ENCODE measurements at regions of chr15 and their contacts with region 1.

Region 1: DNA sequence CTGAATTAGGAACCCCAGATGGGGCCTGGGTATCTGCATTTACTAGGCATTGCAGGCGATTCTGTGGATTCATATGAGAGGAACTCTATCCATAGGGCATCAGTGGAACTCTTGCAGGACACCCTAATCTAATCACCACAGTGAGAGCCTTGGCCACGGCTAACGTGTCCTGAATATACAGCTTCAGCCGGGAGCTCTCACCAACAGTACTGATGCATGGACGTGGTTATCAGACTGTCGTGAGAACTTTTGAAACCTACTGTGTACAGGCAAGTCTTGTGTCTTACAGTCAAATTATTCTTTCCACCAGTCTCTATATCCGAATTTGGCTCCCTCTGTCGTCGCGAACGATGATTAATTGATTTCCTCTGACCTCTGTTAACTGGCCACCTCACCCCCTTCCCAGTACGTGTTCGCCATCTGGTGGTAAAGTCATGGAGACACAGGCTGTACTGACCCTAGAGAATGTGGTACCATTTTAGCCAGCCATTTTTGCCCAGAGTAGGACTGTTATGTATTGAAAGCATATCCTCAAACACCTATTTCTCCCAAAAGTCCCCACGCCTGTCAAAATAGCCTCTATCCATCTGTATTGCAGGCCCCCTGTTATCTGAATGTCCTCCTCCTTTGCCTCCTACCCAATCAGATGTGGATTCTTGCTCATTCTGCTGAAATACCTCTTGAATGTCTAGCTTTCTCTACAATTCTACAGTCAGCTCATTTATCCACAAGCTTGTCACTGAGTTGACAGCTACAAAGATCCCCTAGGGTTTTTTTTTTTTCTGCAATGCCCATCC is 39.7 kb downstream of the GLDN start:
- DNase-seq: peak; percentile 72 to 78
- ATAC-seq: peak; percentile 90 to 97
- H3K4me3 ChIP-seq: no peak overlapping the region
- H3K27ac ChIP-seq: no peak overlapping the region
- H3K4me1 ChIP-seq: no peaks in the 10 kb centered on the region
- CTCF ChIP-seq: peak; percentile 96
- EP300 ChIP-seq: no peak
- POLR2A ChIP-seq: no peak
- RAD21 ChIP-seq: peak; percentile 97 to 99

Region 2: DNA sequence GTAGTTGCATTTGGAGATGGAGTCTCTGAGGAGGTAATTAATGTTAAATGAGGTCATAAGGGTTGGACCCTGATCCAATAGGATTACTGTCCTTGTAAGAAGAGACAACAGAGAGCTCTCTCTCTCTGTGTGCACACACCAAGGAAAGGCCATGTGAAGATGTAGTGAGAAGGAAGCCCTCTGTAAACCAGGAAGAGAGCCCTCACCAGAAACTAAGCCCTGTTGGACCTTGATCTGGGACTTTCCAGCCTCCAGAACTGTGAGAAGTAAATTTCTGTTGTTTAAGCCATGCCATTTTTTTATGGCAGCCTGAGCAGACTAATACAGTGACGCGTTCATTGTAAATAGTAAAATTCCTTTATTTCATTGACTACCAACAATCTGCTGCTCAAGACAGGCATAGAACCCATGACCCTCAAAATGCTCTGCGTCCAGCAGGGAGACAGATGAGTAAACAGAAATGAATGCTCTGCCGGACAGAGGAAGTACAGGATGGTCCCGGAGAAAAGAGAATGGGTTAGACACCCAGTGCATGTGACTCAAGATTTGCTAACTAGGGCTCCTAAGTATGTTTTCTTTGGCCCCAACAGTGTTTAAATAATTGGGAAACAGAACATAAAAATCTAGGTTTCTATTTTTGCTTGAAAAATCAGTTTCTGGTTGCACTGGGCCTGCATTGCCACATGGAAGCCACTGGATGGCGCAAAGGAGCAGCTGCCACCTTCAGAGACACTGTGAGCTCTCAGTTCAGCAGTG is 248.6 kb before region 1 on chr15:
- CTCF ChIA-PET with region 1: interaction called, 12 read pairs
- POLR2A ChIA-PET with region 1: no interaction called
- DNase-seq: peak; percentile 55 to 69
- ATAC-seq: peak; percentile 74 to 89
- H3K4me3 ChIP-seq: no peak overlapping the region
- H3K27ac ChIP-seq: peak overlapping the region; percentile 54 to 57
- H3K4me1 ChIP-seq: peaks cover 13% of the 10 kb centered on the region
- CTCF ChIP-seq: peak; percentile 86
- EP300 ChIP-seq: no peak
- POLR2A ChIP-seq: no peak
- RAD21 ChIP-seq: peak; percentile 68 to 69

Region 3: GRCh38 chr15:51192521-51193280 is 188.5 kb before region 1 on chr15:
- CTCF ChIA-PET with region 1: interaction called, 16 read pairs
- POLR2A ChIA-PET with region 1: no interaction called
- DNase-seq: peak; percentile 81 to 84
- ATAC-seq: peak; percentile 91 to 98
- H3K4me3 ChIP-seq: no peak overlapping the region
- H3K27ac ChIP-seq: no peak overlapping the region
- H3K4me1 ChIP-seq: no peaks in the 10 kb centered on the region
- CTCF ChIP-seq: peak; percentile 92
- EP300 ChIP-seq: no peak
- POLR2A ChIP-seq: no peak
- RAD21 ChIP-seq: peak; percentile 81 to 88

Region 4: DNA sequence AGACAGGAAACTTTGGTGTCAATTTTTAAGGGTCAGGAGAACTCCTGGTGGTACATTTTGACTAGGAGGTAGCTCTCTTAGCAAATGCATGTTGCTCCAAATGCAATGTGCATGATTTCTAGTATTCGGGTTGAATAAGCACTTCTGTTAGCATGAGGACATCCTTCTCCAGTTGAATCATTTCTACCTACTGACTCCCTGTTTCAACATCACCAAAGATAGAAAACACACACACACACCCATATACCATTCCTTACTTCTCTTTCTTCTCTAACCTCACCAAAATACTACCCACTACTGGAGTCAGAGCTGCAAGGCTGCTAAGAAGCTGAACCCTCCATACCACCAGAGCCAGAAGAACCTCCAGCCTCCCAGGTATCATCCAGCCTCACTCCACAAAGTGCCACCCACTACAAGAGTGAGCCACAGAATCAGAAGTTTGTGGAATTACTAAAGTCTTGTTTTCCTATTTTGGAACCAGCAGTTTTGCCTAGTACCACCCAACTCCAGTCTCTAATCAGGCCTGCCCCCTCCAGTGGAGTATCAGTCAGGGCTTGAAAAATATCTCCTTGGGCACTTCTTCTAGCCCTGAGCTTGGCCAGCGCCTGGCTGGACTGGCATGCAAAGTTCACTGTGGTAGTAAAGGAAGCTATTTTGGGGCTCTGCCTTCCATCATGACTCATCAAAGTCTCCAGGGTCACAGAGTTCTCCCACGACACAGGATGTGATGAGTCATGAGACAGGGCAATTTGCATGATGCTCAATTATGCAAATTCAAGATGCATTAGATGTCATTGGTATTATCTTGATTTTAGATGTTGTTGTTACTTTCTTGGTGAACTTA is 153.0 kb before region 1 on chr15:
- CTCF ChIA-PET with region 1: interaction called, 106 read pairs
- POLR2A ChIA-PET with region 1: no interaction called
- DNase-seq: peak; percentile 69 to 72
- ATAC-seq: peak; percentile 71 to 73
- H3K4me3 ChIP-seq: no peak overlapping the region
- H3K27ac ChIP-seq: peak overlapping the region; percentile 31 to 68; a peak in 5 of 6 replicates
- H3K4me1 ChIP-seq: peaks cover 14% of the 10 kb centered on the region
- CTCF ChIP-seq: no peak
- EP300 ChIP-seq: no peak
- POLR2A ChIP-seq: no peak
- RAD21 ChIP-seq: no peak

Region 5: GRCh38 chr15:51299187-51300066 is 81.8 kb before region 1 on chr15:
- CTCF ChIA-PET with region 1: interaction called, 16 read pairs
- POLR2A ChIA-PET with region 1: no interaction called
- DNase-seq: no peak
- ATAC-seq: no peak
- H3K4me3 ChIP-seq: no peak overlapping the region
- H3K27ac ChIP-seq: no peak overlapping the region
- H3K4me1 ChIP-seq: no peaks in the 10 kb centered on the region
- CTCF ChIP-seq: no peak
- EP300 ChIP-seq: no peak
- POLR2A ChIP-seq: no peak
- RAD21 ChIP-seq: no peak

Region 6: GRCh38 chr15:51366960-51367648 is 14.1 kb before region 1 on chr15:
- CTCF ChIA-PET with region 1: interaction called, 62 read pairs
- POLR2A ChIA-PET with region 1: no interaction called
- DNase-seq: peak in 1 of 2 experiments; percentile 82
- ATAC-seq: peak; percentile 58 to 80; a peak in 5 of 6 replicates
- H3K4me3 ChIP-seq: no peak overlapping the region
- H3K27ac ChIP-seq: peak overlapping the region; percentile 13 to 27; a peak in 4 of 6 replicates
- H3K4me1 ChIP-seq: peaks cover 40% of the 10 kb centered on the region
- CTCF ChIP-seq: no peak
- EP300 ChIP-seq: no peak
- POLR2A ChIP-seq: no peak
- RAD21 ChIP-seq: no peak